Natural killer cell (primary cell): ENCODE measurements at regions of chr13 and their contacts with region 1.

Region 1: DNA sequence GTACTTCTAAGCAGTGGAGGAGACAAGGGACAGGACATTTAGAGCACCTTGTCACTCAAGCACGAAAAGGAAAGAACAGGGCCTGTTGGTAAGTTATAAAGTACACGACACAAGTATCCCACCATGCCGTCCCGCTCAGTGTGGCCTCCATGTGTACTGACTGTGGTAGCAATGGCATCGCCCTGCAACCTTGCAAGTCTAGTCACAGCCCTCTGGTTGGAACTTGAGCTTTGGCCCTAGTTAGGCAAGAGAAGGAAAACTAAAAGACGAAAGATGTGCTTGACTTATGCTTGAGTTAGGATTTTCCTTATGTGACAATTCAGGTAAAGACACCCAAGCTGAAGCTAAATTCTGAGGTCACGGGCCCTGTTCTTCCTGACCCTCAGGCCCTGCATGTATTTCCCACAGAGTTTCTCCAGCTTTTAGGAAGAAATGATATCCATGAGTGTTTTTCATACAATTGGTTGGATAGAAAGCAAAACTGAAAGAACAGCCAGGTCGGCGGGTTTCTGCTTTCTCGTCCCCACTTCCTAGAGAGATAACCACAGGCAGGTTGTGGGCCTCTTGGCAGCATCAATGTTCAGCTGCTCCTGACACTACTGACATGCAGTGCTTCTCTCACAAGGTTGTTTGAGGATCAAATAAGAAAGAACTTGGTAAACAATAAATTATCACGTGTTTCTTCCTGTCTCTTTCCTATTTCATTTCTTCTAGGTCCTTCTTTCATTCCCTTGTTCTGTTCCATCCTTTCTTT is 216.2 kb downstream of the IRS2 start:
- DNase-seq: peak in 1 of 2 donors; percentile 58
- ATAC-seq: peak; percentile 59 to 96 (median 62)
- H3K4me3 ChIP-seq: no peak overlapping the region
- H3K4me3 Mint-ChIP-seq: peak overlapping the region; percentile 54
- H3K27ac ChIP-seq: no peak overlapping the region
- H3K27ac Mint-ChIP-seq: peak overlapping the region; percentile 15 to 67
- H3K4me1 ChIP-seq: peaks cover 11% of the 10 kb centered on the region
- H3K4me1 Mint-ChIP-seq: peaks cover 17 to 24% of the 10 kb centered on the region in 2 donors
- H3K27me3 ChIP-seq: no peaks in the 10 kb centered on the region
- H3K27me3 Mint-ChIP-seq: peaks cover 0 to 7% of the 10 kb centered on the region in 2 donors
- CTCF ChIP-seq: no peak

Region 2: GRCh38 chr13:109704771-109705628 is 134.9 kb after region 1 on chr13:
- intact Hi-C with region 1: loop called (anchors 5 kb)
- DNase-seq: no peak
- ATAC-seq: peak in 1 of 3 donors; percentile 27
- H3K4me3 ChIP-seq: no peak overlapping the region
- H3K4me3 Mint-ChIP-seq: peak overlapping the region; percentile 28
- H3K27ac ChIP-seq: no peak overlapping the region
- H3K27ac Mint-ChIP-seq: no peak overlapping the region
- H3K4me1 ChIP-seq: peaks cover 34% of the 10 kb centered on the region
- H3K4me1 Mint-ChIP-seq: peaks cover 39 to 45% of the 10 kb centered on the region in 2 donors
- H3K27me3 ChIP-seq: peaks cover 35% of the 10 kb centered on the region
- H3K27me3 Mint-ChIP-seq: peaks cover 51 to 58% of the 10 kb centered on the region in 2 donors
- CTCF ChIP-seq: no peak